ENCODE measurements at regions of chr14 and their contacts with region 1.

Region 1: DNA sequence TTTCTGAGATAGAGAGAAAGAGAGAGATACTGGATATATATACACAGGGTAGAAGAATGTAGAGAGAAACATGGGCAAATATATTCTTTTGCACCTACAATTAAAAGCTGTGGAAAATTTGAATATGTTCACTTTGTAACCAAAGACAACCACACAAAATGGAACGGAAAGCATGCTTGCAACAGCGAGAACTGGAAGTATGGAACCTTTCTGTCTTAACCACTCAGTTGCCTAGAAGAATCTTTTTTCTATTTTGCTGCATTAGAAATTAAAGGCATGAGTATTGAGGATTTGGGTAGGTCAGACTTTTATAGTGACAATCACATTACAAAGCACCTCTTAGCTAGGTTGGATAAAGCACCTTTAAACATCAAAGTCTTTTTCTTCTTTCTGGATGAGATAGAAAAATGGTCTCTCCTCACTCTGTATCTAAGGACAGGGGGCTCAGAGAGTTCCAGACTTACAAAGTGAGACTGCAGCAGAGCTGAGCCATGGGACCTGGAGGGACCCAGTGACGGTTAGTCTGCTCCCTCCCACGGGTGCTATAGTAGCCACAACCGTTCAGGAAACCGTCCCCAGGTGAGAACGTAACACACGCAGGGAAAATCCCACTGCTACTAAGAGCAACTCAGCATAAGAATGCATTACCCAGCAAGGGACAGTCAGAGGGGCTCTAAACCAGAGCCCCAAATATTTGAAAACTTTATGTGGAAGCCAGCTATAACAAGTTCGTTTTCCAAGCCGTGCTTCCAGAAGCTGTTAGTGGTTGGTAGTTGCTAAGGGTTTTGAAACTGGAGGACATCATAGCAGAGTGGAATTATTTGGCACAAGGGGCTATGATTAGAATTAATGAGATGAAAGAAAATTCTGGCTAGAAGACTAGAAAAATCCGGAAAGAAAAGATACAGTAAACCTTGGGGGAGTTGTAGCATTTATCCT is 97.1 kb downstream of the DAD1 start:
- DNase-seq: peak in 5 of 14 experiments; percentile 24 to 79 (median 53)
- ATAC-seq: peak; percentile 45
- H3K4me3 ChIP-seq: peak overlapping the region; percentile 61
- H3K4me3 Mint-ChIP-seq: peak overlapping the region; percentile 95
- H3K27ac ChIP-seq: peak overlapping the region; percentile 52 to 75
- H3K27ac Mint-ChIP-seq: peak overlapping the region; percentile 93
- H3K4me1 ChIP-seq: peaks cover 7% of the 10 kb centered on the region
- H3K4me1 Mint-ChIP-seq: peaks cover 67% of the 10 kb centered on the region
- H3K27me3 ChIP-seq: no peaks in the 10 kb centered on the region
- H3K27me3 Mint-ChIP-seq: no peaks in the 10 kb centered on the region
- CTCF ChIP-seq: no peak

Region 2: GRCh38 chr14:21997300-21997699 is 494.7 kb before region 1 on chr14:
- CTCF ChIA-PET with region 1: no interaction called
- POLR2A ChIA-PET with region 1: interaction called, 4 read pairs
- intact Hi-C with region 1: loop called in 1 of 2 experiments (anchors 10 kb)
- DNase-seq: peak in 7 of 14 experiments; percentile 16 to 77 (median 47)
- ATAC-seq: peak; percentile 90
- H3K4me3 ChIP-seq: peak overlapping the region; percentile 56
- H3K4me3 Mint-ChIP-seq: peak overlapping the region; percentile 95
- H3K27ac ChIP-seq: no peak overlapping the region
- H3K27ac Mint-ChIP-seq: peak overlapping the region; percentile 88
- H3K4me1 ChIP-seq: peaks cover under 1% of the 10 kb centered on the region
- H3K4me1 Mint-ChIP-seq: peaks cover 27% of the 10 kb centered on the region
- H3K27me3 ChIP-seq: no peaks in the 10 kb centered on the region
- H3K27me3 Mint-ChIP-seq: no peaks in the 10 kb centered on the region
- CTCF ChIP-seq: no peak

Region 3: DNA sequence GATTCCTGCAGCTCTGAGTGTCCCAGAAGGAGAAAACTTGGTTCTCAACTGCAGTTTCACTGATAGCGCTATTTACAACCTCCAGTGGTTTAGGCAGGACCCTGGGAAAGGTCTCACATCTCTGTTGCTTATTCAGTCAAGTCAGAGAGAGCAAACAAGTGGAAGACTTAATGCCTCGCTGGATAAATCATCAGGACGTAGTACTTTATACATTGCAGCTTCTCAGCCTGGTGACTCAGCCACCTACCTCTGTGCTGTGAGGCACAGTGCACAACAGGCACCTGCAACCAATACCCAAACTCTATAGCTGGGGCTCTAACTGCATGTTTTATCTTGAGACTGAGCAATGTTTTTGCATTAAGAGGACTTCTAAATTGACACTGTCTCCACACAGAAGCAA is 439.2 kb before region 1 on chr14:
- CTCF ChIA-PET with region 1: no interaction called
- POLR2A ChIA-PET with region 1: no interaction called
- intact Hi-C with region 1: loop called in 1 of 2 experiments (anchors 10 kb)
- DNase-seq: peak in 9 of 14 experiments; percentile 7 to 52 (median 31)
- ATAC-seq: peak; percentile 77
- H3K4me3 ChIP-seq: peak overlapping the region; percentile 44
- H3K4me3 Mint-ChIP-seq: peak overlapping the region; percentile 98
- H3K27ac ChIP-seq: peak overlapping the region; percentile 23 to 24
- H3K27ac Mint-ChIP-seq: peak overlapping the region; percentile 99
- H3K4me1 ChIP-seq: no peaks in the 10 kb centered on the region
- H3K4me1 Mint-ChIP-seq: peaks cover 47% of the 10 kb centered on the region
- H3K27me3 ChIP-seq: no peaks in the 10 kb centered on the region
- H3K27me3 Mint-ChIP-seq: peaks cover 5% of the 10 kb centered on the region
- CTCF ChIP-seq: no peak

Region 4: DNA sequence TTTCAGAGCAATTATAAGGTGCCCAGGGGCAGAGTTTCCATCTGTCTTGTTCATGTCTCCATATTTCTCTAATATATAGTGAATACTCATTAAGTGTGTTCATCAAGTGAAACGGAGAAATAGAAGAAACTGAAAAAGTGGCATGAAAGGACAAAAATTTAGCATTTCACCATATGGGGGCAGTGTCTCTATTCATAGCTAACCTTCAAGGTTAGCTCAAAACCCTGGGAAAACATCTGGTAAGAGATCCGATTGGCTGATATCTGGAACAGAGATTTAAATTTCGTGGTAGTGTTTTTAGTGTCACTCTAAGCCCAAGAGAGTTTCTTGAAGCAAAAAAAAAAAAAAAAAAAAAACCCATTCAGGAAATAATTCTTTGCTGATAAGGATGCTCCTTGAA is 270.4 kb before region 1 on chr14:
- CTCF ChIA-PET with region 1: no interaction called
- POLR2A ChIA-PET with region 1: interaction called, 3 read pairs
- intact Hi-C with region 1: loop called (anchors 10 kb)
- DNase-seq: peak in 3 of 14 experiments; percentile 39 to 51 (median 39)
- ATAC-seq: peak; percentile 41
- H3K4me3 ChIP-seq: no peak overlapping the region
- H3K4me3 Mint-ChIP-seq: peak overlapping the region; percentile 73
- H3K27ac ChIP-seq: no peak overlapping the region
- H3K27ac Mint-ChIP-seq: peak overlapping the region; percentile 67
- H3K4me1 ChIP-seq: no peaks in the 10 kb centered on the region
- H3K4me1 Mint-ChIP-seq: peaks cover 17% of the 10 kb centered on the region
- H3K27me3 ChIP-seq: no peaks in the 10 kb centered on the region
- H3K27me3 Mint-ChIP-seq: no peaks in the 10 kb centered on the region
- CTCF ChIP-seq: peak; percentile 12

Region 5: DNA sequence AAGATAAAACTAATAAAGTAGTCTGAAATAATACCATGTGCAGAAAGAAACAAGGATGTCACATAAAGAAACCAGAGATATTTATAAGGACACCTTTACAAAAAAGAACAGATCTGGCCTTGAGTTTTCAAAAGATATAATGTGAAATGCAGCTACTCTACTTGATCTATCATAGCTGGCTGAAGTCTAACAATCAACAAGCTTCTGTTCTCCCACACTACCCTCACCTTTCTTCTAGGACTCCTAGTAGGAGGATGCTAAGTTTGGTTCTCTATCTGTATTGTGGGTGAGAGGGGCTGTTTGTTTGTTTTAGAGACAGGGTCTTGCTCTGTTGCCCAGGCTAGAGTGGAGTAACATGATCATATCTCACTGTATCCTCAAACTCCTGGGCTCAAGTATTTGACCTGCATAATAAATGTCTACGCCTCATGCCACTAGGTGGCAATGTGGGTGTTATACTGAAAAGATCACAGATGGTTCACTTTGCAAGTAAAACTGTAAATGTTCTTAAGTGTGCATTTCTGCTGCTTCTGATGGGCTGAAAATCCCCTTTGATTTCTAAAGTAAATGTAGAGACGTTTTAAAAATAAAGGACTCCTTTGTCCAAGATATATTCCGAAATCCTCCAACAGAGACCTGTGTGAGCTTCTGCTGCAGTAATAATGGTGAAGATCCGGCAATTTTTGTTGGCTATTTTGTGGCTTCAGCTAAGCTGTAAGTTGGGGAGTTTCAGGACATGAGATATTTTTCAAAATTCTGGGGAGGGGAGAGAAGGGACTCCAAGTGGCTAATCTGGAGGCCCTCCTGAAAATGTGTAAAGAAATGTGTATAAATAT is 172.2 kb before region 1 on chr14:
- CTCF ChIA-PET with region 1: no interaction called
- POLR2A ChIA-PET with region 1: interaction called, 4 read pairs
- intact Hi-C with region 1: loop called in 1 of 2 experiments (anchors 5 kb)
- DNase-seq: peak in 6 of 14 experiments; percentile 6 to 40 (median 22)
- ATAC-seq: peak; percentile 43
- H3K4me3 ChIP-seq: peak overlapping the region; percentile 22
- H3K4me3 Mint-ChIP-seq: peak overlapping the region; percentile 81
- H3K27ac ChIP-seq: no peak overlapping the region
- H3K27ac Mint-ChIP-seq: peak overlapping the region; percentile 77
- H3K4me1 ChIP-seq: no peaks in the 10 kb centered on the region
- H3K4me1 Mint-ChIP-seq: no peaks in the 10 kb centered on the region
- H3K27me3 ChIP-seq: no peaks in the 10 kb centered on the region
- H3K27me3 Mint-ChIP-seq: no peaks in the 10 kb centered on the region
- CTCF ChIP-seq: peak; percentile 18

Region 6: GRCh38 chr14:22418631-22419030 is 73.3 kb before region 1 on chr14:
- CTCF ChIA-PET with region 1: no interaction called
- POLR2A ChIA-PET with region 1: no interaction called
- intact Hi-C with region 1: no loop called
- DNase-seq: no peak
- ATAC-seq: no peak
- H3K4me3 ChIP-seq: no peak overlapping the region
- H3K4me3 Mint-ChIP-seq: no peak overlapping the region
- H3K27ac ChIP-seq: no peak overlapping the region
- H3K27ac Mint-ChIP-seq: no peak overlapping the region
- H3K4me1 ChIP-seq: no peaks in the 10 kb centered on the region
- H3K4me1 Mint-ChIP-seq: no peaks in the 10 kb centered on the region
- H3K27me3 ChIP-seq: no peaks in the 10 kb centered on the region
- H3K27me3 Mint-ChIP-seq: no peaks in the 10 kb centered on the region
- CTCF ChIP-seq: no peak

Region 7: DNA sequence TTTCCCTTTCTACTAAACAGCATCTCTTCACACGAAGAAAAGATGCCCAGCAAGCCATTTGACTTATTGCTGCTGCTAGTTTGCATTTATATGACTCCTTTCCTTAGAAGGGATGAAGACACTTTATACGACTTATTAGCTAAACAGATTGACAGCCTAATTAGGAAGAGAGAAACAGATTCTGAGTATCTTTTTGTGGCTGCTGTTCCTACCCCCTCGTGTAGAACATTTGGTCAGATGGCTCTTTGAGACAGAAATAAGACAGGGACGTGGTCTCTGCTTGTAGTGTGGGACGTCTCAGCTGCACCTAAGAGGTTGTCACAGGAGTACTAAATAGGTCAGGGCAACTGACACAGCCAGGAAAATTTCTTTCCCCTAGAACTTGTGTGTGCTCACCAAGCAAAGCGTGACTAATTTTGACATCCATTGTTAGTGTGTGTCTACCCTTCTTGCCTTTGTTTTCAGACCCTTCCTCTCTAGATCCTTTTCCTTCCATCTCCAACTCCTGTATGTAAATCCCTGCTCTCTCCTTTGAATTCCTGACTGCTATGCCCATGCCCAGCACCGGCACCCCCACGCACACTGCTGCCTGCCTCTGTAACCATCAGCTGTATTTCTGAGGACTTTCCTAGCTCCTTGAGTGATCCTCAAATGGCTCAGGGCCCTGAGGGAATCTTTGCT is 13.9 kb after region 1 on chr14:
- CTCF ChIA-PET with region 1: no interaction called
- POLR2A ChIA-PET with region 1: interaction called, 412 read pairs
- intact Hi-C with region 1: loop called in 1 of 2 experiments (anchors 2 kb)
- DNase-seq: peak in 5 of 14 experiments; percentile 26 to 65 (median 56)
- ATAC-seq: peak; percentile 36
- H3K4me3 ChIP-seq: peak overlapping the region; percentile 61
- H3K4me3 Mint-ChIP-seq: peak overlapping the region; percentile 77
- H3K27ac ChIP-seq: peak overlapping the region; percentile 77 to 99
- H3K27ac Mint-ChIP-seq: peak overlapping the region; percentile 93
- H3K4me1 ChIP-seq: peaks cover 45% of the 10 kb centered on the region
- H3K4me1 Mint-ChIP-seq: peaks cover 79% of the 10 kb centered on the region
- H3K27me3 ChIP-seq: no peaks in the 10 kb centered on the region
- H3K27me3 Mint-ChIP-seq: no peaks in the 10 kb centered on the region
- CTCF ChIP-seq: no peak

Region 8: GRCh38 chr14:22519877-22520685 is 28.1 kb after region 1 on chr14:
- CTCF ChIA-PET with region 1: no interaction called
- POLR2A ChIA-PET with region 1: interaction called, 412 read pairs
- intact Hi-C with region 1: no loop called
- DNase-seq: peak in 2 of 14 experiments; percentile 30 to 61
- ATAC-seq: peak; percentile 19
- H3K4me3 ChIP-seq: peak overlapping the region; percentile 61
- H3K4me3 Mint-ChIP-seq: peak overlapping the region; percentile 86
- H3K27ac ChIP-seq: peak overlapping the region; percentile 85 to 99
- H3K27ac Mint-ChIP-seq: peak overlapping the region; percentile 93
- H3K4me1 ChIP-seq: peaks cover 89% of the 10 kb centered on the region
- H3K4me1 Mint-ChIP-seq: peaks cover 100% of the 10 kb centered on the region
- H3K27me3 ChIP-seq: no peaks in the 10 kb centered on the region
- H3K27me3 Mint-ChIP-seq: no peaks in the 10 kb centered on the region
- CTCF ChIP-seq: no peak

Region 9: GRCh38 chr14:22598099-22598899 is 106.3 kb after region 1 on chr14 and contains the start of gene ABHD4:
- CTCF ChIA-PET with region 1: no interaction called
- POLR2A ChIA-PET with region 1: no interaction called
- intact Hi-C with region 1: no loop called
- DNase-seq: peak; percentile 14 to 77 (median 50)
- ATAC-seq: peak; percentile 61
- H3K4me3 ChIP-seq: peak within 1 kb of the TSS; percentile 75
- H3K4me3 Mint-ChIP-seq: peak within 1 kb of the TSS; percentile 98
- H3K27ac ChIP-seq: peak within 1 kb of the TSS; percentile 34 to 38
- H3K27ac Mint-ChIP-seq: peak within 1 kb of the TSS; percentile 77
- H3K4me1 ChIP-seq: peaks cover 21% of the 10 kb centered on the region
- H3K4me1 Mint-ChIP-seq: peaks cover 24% of the 10 kb centered on the region
- H3K27me3 ChIP-seq: no peaks in the 10 kb centered on the region
- H3K27me3 Mint-ChIP-seq: no peaks in the 10 kb centered on the region
- CTCF ChIP-seq: no peak
- total RNA-seq, gene ABHD4: 7.1 to 8.9 TPM